AG04449 (cell line): ENCODE measurements at regions of chr4 and their contacts with region 1.

Region 1: DNA sequence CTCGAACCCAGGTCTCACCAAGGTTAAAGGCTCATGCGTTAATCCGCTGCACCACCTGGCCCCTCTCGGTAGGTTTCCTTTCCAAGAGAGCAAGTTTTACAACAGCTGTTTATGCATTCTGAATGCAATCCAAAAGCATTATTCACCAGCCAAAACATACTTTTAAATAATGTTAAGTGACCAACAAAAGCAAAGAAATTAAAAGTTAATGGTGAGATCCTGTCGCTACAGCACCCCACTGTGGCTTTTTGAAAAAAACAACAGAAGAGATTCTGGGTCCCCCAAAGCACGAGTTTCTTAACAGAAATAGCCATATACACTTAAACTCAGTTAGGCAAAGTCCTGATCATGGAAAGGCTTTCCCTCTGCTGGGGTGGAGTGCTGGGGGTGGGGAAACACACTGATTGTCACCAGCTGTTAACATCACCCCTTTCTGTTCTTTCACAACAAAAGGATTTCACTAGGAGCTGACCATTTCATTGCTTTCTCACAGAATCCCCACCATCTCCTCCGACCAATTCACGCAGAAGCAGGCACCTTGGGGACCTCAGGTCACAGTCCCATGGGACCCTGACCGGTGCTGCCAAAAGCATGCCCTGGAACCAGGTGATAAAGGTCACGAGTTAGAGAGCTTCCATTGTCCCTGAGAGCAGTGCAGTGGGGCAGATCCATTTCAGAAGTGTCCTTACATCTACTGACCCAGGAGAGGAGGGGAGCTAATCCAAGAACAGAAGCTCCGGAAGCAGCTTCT is 51.2 kb downstream of the ZNF827 start:
- DNase-seq: peak; percentile 28
- H3K4me3 ChIP-seq: no peak overlapping the region
- CTCF ChIP-seq: no peak

Region 2: GRCh38 chr4:145898926-145899531 is 11.6 kb after region 1 on chr4:
- CTCF ChIA-PET with region 1: interaction called, 17 read pairs
- POLR2A ChIA-PET with region 1: no interaction called
- DNase-seq: no peak
- H3K4me3 ChIP-seq: no peak overlapping the region
- CTCF ChIP-seq: no peak